Mammary epithelial cell (primary cell): ENCODE measurements at regions of chr2 and their contacts with region 1.

Region 1: DNA sequence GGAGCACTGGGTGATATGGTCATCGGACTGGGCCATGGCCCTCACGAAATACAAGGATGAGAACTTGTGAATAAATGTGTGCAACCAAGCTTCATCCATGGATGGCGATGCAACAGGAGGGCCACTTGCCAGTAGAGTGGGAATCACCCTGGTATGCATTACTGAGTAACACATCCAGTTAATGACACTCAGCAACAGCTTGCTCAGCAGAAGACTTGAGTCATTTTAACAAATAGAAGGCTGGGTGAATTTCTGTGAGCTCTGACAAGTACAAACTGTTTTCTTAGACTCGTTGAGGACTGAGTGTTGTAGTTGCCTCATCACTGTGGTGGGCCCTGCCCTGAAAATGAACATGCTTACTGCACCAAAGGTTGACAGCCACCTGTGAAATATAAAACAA is 221.6 kb downstream of the NCKAP5 start:
- DNase-seq: peak; percentile 90
- H3K4me3 ChIP-seq: no peak overlapping the region
- H3K27ac ChIP-seq: no peak overlapping the region
- H3K4me1 ChIP-seq: no peaks in the 10 kb centered on the region
- H3K27me3 ChIP-seq: no peaks in the 10 kb centered on the region
- CTCF ChIP-seq: no peak

Region 2: DNA sequence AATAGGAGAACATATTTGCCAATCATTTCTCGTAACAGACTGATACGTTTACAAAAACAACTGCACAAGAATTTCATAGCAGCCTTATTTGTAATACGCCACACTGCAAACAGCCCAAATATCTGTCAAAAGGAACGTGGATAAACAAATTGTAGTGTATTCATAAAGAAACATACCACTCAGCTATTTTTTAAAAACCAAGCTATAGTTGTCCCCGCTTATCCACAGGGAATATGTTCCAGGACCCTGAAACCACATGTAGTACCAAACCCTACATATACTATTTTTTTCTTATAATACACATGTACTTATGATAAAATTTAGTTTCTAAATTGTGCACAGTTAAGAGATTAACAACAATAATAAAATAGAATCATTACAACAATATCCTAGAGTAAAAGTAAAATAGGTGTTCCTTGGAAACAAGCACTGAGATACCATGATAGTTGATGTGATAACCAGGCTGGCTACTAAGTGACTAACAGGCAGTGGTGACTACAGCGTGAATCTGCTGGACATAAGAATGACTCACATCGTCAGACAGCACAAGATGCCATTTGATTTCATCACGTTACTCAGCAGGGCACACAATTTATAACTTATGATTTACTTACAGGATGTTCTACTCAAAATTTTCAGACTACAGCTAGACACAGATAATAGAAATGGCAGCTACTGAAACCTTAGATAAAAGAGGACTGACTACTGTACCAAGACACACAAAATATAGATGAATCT is 145.8 kb before region 1 on chr2:
- CTCF ChIA-PET with region 1: no interaction called
- dilution Hi-C with region 1: no loop called
- in situ Hi-C with region 1: no loop called
- intact Hi-C with region 1: loop called (anchors 10 kb)
- DNase-seq: peak; percentile 91
- H3K4me3 ChIP-seq: no peak overlapping the region
- H3K27ac ChIP-seq: peak overlapping the region; percentile 86
- H3K4me1 ChIP-seq: peaks cover 15% of the 10 kb centered on the region
- H3K27me3 ChIP-seq: no peaks in the 10 kb centered on the region
- CTCF ChIP-seq: no peak

Region 3: GRCh38 chr2:133324147-133324561 is 22.5 kb before region 1 on chr2:
- CTCF ChIA-PET with region 1: no interaction called
- dilution Hi-C with region 1: no loop called
- in situ Hi-C with region 1: no loop called
- intact Hi-C with region 1: no loop called
- DNase-seq: no peak
- H3K4me3 ChIP-seq: no peak overlapping the region
- H3K27ac ChIP-seq: no peak overlapping the region
- H3K4me1 ChIP-seq: no peaks in the 10 kb centered on the region
- H3K27me3 ChIP-seq: no peaks in the 10 kb centered on the region
- CTCF ChIP-seq: no peak

Region 4: GRCh38 chr2:133378928-133379549 is 32.4 kb after region 1 on chr2:
- CTCF ChIA-PET with region 1: no interaction called
- dilution Hi-C with region 1: no loop called
- in situ Hi-C with region 1: no loop called
- intact Hi-C with region 1: loop called (anchors 2 kb)
- DNase-seq: peak; percentile 92
- H3K4me3 ChIP-seq: no peak overlapping the region
- H3K27ac ChIP-seq: peak overlapping the region; percentile 61
- H3K4me1 ChIP-seq: peaks cover 45% of the 10 kb centered on the region
- H3K27me3 ChIP-seq: no peaks in the 10 kb centered on the region
- CTCF ChIP-seq: no peak